WTC11 (cell line): ENCODE measurements at regions of chr5 and their contacts with region 1.

Region 1: GRCh38 chr5:53035868-53036381 is 46.8 kb downstream of the ITGA2 start:
- DNase-seq: no peak
- ATAC-seq: peak; percentile 85
- H3K4me3 Mint-ChIP-seq: no peak overlapping the region
- H3K27ac Mint-ChIP-seq: no peak overlapping the region
- H3K4me1 Mint-ChIP-seq: no peaks in the 10 kb centered on the region
- H3K27me3 Mint-ChIP-seq: no peaks in the 10 kb centered on the region
- CTCF ChIP-seq: no peak

Region 2: GRCh38 chr5:52884453-52884852 is 151.5 kb before region 1 on chr5:
- CTCF ChIA-PET with region 1: no interaction called
- POLR2A ChIA-PET with region 1: no interaction called
- DNase-seq: no peak
- ATAC-seq: no peak
- H3K4me3 Mint-ChIP-seq: no peak overlapping the region
- H3K27ac Mint-ChIP-seq: no peak overlapping the region
- H3K4me1 Mint-ChIP-seq: no peaks in the 10 kb centered on the region
- H3K27me3 Mint-ChIP-seq: no peaks in the 10 kb centered on the region
- CTCF ChIP-seq: no peak

Region 3: DNA sequence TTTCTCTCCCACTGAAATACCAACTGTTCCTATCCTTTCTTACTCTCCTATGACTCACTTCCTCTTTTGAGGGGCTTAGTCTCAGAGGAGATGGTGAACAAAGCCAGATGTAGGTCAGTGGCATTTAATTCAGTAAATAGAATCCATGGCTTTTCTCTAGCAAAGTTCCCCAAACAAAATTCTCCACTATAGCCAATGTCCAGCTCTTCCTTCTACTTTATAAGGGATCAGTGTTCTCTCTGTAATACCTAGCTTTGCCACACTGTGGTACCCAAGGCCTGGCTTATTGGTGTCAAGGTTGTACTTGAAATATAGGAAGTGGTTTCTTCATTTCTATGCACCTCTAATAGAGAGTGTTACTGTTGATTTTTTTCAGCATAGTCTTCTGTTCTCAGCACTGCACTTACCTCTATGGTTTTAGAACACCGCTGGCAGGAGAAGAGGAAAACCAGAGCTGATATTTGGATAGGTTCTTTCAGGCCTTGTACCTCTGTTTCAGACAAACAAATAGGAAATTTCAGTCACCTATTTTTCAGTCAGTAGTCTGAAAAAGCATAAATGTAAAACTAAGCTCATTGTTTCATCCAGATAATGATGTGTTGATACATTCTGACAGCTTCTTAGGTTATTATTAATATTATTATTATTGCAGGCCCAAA is 87.4 kb before region 1 on chr5:
- CTCF ChIA-PET with region 1: interaction called, 36 read pairs
- POLR2A ChIA-PET with region 1: no interaction called
- DNase-seq: peak; percentile 60
- ATAC-seq: peak; percentile 97
- H3K4me3 Mint-ChIP-seq: no peak overlapping the region
- H3K27ac Mint-ChIP-seq: no peak overlapping the region
- H3K4me1 Mint-ChIP-seq: no peaks in the 10 kb centered on the region
- H3K27me3 Mint-ChIP-seq: no peaks in the 10 kb centered on the region
- CTCF ChIP-seq: peak; percentile 51; the same call in 1 of the 2 replicates

Region 4: DNA sequence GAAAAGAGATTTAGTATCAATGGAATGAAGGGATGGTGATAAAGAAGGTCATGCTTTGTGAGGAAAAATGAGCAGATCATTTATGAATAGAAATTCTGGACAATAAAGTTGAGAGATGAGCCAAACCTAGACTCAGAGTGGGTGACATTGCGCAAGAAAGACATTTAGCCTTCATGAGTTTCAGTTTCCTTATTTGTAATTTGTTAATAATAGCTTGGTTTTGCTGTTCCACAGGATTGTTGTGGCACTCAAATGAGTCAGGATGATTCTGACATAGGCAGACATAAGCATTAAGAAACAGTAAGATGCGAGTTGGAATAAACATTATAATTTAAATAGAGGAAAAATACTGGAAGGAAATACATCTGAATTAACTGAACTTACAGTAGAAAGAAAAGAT is 12.0 kb before region 1 on chr5:
- CTCF ChIA-PET with region 1: interaction called, 10 read pairs
- POLR2A ChIA-PET with region 1: no interaction called
- DNase-seq: no peak
- ATAC-seq: no peak
- H3K4me3 Mint-ChIP-seq: no peak overlapping the region
- H3K27ac Mint-ChIP-seq: no peak overlapping the region
- H3K4me1 Mint-ChIP-seq: peaks cover 7% of the 10 kb centered on the region
- H3K27me3 Mint-ChIP-seq: no peaks in the 10 kb centered on the region
- CTCF ChIP-seq: no peak

Region 5: DNA sequence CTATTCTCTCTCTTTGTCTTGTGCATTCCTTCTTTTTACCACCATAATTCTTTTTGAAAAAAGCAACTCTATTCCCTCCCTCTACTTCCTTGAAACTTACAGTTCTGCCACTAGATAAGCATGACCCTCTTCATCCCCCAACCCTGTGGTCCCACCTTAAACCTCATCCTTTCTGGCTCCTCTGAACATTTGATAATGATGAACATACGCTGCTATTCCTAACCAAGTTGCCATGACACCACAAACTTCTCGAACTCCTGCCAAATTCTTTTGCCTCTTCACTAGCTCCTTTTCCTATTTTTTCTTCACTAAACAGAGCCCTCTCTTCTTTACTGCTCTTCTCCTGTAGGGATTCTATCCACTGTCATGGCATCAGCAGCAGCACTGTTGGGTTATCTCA is 16.6 kb after region 1 on chr5:
- CTCF ChIA-PET with region 1: interaction called, 14 read pairs
- POLR2A ChIA-PET with region 1: interaction called, 3 read pairs
- DNase-seq: no peak
- ATAC-seq: no peak
- H3K4me3 Mint-ChIP-seq: no peak overlapping the region
- H3K27ac Mint-ChIP-seq: no peak overlapping the region
- H3K4me1 Mint-ChIP-seq: no peaks in the 10 kb centered on the region
- H3K27me3 Mint-ChIP-seq: no peaks in the 10 kb centered on the region
- CTCF ChIP-seq: no peak

Region 6: DNA sequence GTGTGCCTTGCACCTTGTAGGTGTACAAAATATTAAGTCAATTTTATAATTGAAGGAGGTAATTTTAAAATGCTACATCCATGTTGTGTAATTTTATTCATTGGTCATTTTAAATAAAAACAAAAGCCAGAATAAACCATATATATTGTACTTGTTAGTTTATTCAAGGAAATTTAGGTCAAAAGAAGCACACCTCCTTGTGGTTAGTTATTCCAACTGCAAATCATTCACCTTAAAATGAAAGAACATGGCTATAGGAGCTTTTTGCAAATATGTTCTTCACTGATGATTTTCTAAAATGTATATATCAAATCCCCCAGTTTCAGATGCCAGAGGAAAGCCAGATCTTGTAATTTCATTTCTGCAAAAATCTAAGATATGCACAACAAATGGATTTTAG is 79.1 kb after region 1 on chr5:
- CTCF ChIA-PET with region 1: interaction called, 10 read pairs
- POLR2A ChIA-PET with region 1: no interaction called
- DNase-seq: no peak
- ATAC-seq: no peak
- H3K4me3 Mint-ChIP-seq: no peak overlapping the region
- H3K27ac Mint-ChIP-seq: no peak overlapping the region
- H3K4me1 Mint-ChIP-seq: peaks cover 18% of the 10 kb centered on the region
- H3K27me3 Mint-ChIP-seq: no peaks in the 10 kb centered on the region; the same call in 1 of the 2 replicates
- CTCF ChIP-seq: no peak